Right ventricle myocardium superior (tissue), 1 donor: ENCODE measurements at regions of chr6 and their contacts with region 1.

Region 1: DNA sequence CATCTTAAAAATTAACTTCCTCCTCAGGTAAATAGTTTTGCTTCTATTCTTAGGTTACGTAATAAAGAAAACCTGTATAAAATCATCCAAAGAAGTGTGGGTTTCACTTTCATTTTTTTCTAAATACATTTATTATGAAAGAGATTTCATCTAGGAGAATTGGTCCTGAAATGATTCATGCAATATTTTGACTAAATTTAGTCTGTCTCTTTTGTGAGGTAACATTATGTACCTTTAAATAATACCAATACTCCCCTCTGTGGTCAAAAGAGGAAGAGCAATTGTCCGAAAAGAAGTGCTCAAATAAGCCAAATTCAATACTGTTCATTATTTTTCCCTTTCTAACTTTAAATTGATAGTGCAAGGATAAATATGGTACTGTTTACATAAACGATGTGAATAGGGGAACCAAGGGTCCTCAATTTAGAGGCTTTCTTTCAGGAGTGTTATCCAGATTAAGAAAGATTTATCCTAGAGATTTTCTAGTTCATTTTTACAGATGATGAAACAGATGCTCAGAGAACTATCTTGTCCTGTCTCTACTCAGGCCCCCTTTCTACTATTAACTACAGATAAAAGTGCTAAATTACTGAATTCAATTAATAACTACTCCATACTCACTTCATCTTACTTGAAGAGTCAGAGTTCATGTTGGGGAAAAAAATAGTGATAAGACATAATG is 26.2 kb downstream of the CYP39A1 start:
- DNase-seq: no peak
- ATAC-seq: peak; percentile 68

Region 2: DNA sequence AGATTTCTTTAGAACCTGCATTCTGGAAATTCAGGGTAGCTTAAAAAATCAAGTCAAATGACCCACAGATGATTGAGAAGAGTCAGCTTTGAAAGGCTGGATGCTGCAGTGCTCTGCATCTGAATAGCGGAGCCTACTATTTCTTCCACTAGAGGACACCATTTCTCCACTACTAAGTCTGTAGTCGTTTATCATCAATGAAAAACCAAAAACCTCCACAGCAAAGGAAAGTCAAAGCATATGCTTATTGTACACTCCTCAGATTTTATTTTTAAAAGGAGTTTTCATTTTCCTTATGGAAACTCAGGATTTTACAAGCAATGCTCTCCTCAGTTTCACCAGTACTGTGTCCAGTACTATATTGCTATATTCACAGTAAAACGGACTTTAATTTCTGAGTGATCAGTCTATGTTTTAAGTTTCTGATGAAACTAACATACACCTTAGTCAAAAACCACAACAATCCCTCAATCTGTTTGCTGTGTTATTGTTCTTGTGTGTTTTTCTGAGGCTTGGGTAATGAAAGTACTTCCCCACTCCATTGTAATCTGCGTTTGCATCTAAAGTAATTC is 405.1 kb before region 1 on chr6:
- intact Hi-C with region 1: loop called (anchors 10 kb)
- DNase-seq: no peak
- ATAC-seq: peak; percentile 65

Region 3: GRCh38 chr6:46491628-46492547 is 134.5 kb before region 1 on chr6:
- intact Hi-C with region 1: loop called (anchors 2 kb)
- DNase-seq: peak; percentile 74
- ATAC-seq: peak; percentile 89

Region 4: GRCh38 chr6:46690141-46690755 is 63.9 kb after region 1 on chr6:
- intact Hi-C with region 1: no loop called
- DNase-seq: no peak
- ATAC-seq: no peak

Region 5: GRCh38 chr6:47477497-47478232 is 851.3 kb after region 1 on chr6 and contains the start of gene CD2AP:
- intact Hi-C with region 1: no loop called
- DNase-seq: peak; percentile 87
- ATAC-seq: peak; percentile 97
- total RNA-seq, gene CD2AP: 10.8 TPM